Activated CD4-positive, alpha-beta memory T cell treated with anti-CD3 and anti-CD28 coated beads, Interleukin-2, amount 10 ng/mL, durations not matched to agents 7 days and 5 days (primary cell): ENCODE measurements at regions of chr13 and their contacts with region 1.

Region 1: GRCh38 chr13:98484289-98485219 is 92.4 kb downstream of the STK24 start:
- DNase-seq: peak; percentile 83
- H3K4me3 Mint-ChIP-seq: peak overlapping the region; percentile 51
- H3K27ac Mint-ChIP-seq: peak overlapping the region; percentile 90
- H3K4me1 Mint-ChIP-seq: peaks cover 90% of the 10 kb centered on the region
- H3K27me3 Mint-ChIP-seq: no peaks in the 10 kb centered on the region

Region 2: DNA sequence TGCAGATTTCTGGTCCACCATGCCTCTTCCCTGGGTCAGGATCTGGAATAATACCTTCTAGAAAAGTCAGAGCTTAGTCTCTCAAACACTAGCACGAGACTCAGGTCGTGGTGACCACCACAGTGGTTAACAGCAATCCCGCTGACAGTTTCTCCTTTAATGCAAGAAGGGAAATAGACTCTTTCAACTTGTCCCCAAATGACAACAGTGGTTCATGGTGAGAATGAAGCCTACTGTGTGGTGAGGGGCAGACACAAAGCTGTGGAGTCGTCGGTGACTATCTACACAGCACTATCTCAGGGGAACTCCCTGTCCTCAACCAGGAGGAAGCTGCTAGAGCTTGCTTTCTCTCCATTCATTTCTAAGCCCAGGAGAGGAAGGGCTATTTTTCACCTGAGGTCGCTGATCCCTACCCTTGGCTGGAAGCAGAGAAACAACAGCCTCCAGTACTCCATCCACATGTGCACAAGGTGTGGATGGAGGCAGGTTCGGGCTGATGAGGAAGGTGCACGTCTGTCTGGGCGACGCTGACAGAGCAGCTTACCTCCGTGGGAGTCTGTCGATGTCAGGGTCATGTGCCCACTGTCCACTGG is 19.9 kb after region 1 on chr13:
- CTCF ChIA-PET with region 1: interaction called, 6 read pairs
- POLR2A ChIA-PET with region 1: interaction called, 21 read pairs
- DNase-seq: peak; percentile 52
- H3K4me3 Mint-ChIP-seq: no peak overlapping the region
- H3K27ac Mint-ChIP-seq: no peak overlapping the region
- H3K4me1 Mint-ChIP-seq: peaks cover 74% of the 10 kb centered on the region
- H3K27me3 Mint-ChIP-seq: no peaks in the 10 kb centered on the region

Region 3: DNA sequence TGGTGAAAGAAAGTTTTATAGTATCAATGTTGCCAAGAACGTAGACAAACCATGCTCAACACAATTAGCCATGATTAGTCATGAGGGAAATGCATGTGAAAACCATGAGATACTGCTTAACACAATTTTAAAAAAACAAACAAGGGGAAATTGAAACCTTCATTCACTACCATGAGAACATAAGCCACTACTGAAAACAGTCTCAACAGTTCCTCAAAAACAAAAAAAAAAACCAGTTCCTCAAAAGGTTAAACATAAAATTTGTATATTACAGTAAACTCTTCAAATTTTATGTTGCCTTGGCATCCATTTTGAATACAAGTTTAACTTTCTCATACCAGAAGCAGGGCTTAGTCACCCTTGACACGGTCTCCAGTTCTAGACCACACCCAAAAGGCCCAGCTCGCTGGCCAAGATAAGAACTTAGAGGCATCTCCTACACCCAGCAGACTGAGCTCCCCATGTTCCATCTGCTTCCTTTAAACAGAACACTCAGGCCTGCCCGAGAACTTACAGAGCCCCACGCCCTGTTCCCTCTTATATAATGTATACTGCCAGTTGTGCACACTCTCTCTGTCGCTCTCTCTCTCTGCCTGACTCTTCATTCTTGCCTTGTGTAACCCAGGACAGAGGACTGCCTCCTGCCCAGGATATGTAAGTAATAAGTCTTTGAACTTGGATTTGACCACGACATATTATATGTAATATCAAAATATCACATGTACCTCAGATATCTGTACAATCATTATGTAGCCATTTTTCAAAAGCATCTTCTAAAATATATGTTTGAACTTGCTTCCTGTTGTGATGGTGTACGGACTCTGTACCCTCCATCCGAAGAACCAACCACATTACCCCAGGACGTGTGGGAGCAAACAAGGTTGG is 25.0 kb after region 1 on chr13:
- CTCF ChIA-PET with region 1: interaction called, 6 read pairs
- POLR2A ChIA-PET with region 1: interaction called, 21 read pairs
- DNase-seq: peak; percentile 69
- H3K4me3 Mint-ChIP-seq: peak overlapping the region; percentile 1
- H3K27ac Mint-ChIP-seq: peak overlapping the region; percentile 87
- H3K4me1 Mint-ChIP-seq: peaks cover 91% of the 10 kb centered on the region
- H3K27me3 Mint-ChIP-seq: no peaks in the 10 kb centered on the region

Region 4: DNA sequence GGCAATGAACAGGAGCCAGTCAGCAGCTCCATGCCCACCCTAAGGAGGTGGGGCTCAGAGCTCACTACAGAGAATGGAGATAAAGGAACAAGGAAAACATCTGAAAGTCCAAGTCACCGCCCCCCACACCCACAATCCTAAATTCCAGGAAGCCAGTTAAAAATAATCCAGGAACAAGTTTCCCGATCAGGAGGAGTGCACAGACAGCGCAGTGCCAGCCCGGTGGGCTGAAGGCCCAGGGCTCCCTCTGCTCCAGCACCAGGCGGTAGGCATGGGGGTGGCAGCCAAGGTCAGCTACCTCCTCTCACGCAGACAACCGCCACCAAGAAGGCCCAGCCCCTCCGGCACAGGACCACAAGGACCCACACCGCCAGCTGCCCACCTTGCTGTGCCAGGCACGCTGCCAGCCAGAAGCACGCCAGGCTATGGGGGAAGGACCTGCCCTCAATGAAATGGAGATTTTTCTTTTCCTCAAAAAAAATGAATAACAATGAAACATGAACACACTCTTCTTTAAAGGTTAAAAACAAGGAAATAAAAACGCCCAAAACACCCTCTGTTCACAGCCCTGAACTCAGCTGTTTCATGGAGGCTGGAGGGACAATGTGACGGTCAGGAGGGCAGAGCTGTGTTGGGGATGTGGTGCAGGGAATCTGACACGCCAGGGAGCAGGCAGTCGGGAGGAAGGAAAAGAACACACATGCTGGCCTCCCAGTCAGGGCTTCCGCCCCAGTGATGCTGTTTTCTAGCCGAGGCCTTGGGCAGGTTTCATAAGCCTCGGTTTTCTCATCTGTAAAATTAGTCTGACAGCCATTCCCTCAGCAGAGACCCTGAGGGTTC is 81.4 kb after region 1 on chr13:
- CTCF ChIA-PET with region 1: interaction called, 8 read pairs
- POLR2A ChIA-PET with region 1: interaction called, 12 read pairs
- DNase-seq: no peak
- H3K4me3 Mint-ChIP-seq: peak overlapping the region; percentile 18
- H3K27ac Mint-ChIP-seq: peak overlapping the region; percentile 80
- H3K4me1 Mint-ChIP-seq: peaks cover 92% of the 10 kb centered on the region
- H3K27me3 Mint-ChIP-seq: no peaks in the 10 kb centered on the region